Motor neuron (in vitro differentiated cells): ENCODE measurements at regions of chr12 and their contacts with region 1.

Region 1: DNA sequence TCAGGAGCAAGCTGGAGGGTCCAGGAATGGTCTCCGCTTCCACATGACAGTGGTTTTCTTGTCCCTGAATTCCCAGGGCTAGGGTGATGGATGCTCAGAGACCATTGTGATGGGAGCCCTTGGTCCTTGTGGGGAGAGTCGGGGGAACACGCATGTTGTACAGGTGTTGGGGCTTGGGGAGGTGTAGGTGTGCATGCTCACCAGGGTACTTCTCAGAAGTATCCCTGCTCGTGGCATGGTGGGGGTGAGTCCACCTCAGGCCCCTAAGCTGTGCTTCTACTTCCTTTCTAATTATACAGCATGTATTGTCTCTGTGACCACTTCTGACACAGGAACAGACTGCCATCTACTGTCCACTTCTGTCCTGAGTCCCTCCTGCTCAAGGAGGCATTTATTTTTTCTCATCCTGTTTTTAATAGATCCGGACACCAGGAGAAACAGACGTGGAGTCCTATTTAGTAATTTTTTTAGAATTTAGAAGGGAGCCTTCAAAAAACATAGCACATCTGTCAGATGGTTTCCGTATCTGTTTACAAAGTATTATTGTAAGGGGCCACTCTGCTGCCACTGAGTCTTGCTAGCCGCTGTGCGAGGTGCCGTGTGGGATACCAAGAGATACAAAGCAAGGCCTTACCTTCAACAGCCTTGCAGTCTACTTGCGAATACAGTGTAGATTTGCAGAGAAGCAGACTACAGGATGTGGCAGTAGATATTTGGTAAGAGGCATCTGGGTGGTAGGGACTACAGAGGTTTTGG is 10.5 kb downstream of the NTF3 start:
- ATAC-seq: peak; percentile 67 to 97 (median 86)
- H3K4me3 ChIP-seq: no peak overlapping the region
- H3K27ac ChIP-seq: no peak overlapping the region
- H3K4me1 ChIP-seq: no peaks in the 10 kb centered on the region

Region 2: DNA sequence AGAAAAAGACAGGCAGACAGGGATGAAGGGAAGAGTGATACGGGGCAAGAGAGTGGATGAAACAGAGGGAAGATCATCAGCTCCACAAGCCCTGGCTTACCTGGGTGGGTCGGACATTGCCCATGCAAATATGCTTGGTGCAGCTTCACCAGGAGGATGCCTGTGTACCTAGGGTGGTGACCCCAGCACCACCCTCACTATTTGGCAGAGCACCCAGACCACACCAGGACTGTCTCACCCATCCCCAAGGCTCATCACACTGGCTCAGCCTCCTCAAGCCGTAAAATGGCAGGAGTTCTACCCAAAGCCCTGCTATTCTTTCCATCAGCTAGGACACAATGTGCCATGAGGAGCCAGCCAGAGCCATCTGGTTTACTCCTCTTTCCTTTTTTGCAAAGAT is 719.2 kb before region 1 on chr12:
- in situ Hi-C with region 1: no loop called
- ATAC-seq: peak in 2 of 8 experiments; percentile 24 to 50
- H3K4me3 ChIP-seq: no peak overlapping the region
- H3K27ac ChIP-seq: no peak overlapping the region
- H3K4me1 ChIP-seq: no peaks in the 10 kb centered on the region

Region 3: GRCh38 chr12:5200278-5201087 is 241.9 kb before region 1 on chr12:
- in situ Hi-C with region 1: loop called in 6 of 9 experiments (anchors 25 kb)
- ATAC-seq: peak; percentile 49 to 86 (median 54)
- H3K4me3 ChIP-seq: no peak overlapping the region
- H3K27ac ChIP-seq: peak overlapping the region; percentile 84 to 89
- H3K4me1 ChIP-seq: peaks cover 39 to 42% of the 10 kb centered on the region in 2 donors

Region 4: DNA sequence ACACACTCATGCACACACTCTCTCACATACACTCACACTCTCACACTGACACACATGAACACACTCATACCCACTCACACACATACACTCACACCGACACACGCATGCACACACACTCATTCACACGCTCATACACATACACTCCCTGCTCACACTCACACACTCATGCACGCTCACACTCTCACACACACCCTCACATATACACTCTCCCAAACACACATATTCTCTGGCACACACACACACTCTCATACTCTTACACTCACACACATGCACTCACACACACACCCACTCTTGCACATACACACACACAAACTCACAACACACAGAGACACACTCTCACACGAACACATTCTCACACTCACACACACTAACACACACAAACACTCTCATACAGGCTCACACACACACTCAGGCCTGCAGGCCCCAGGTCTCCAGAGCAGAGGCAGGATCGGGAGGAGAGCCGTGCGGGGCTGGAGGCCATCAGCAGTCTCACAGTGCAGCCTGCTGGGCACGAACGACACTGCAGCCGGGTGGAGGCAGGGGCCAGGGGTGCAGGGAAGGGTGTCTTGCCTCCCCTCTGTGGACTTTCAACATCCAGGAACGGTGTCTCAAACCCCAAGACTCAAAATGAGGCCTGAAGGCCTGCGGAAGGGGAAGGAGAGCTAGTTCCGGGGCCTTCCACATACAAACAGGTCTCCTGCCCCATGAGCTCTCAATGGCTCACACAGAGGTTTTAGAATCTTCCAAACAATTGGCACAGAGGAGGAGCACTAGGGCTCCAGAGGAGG is 353.9 kb after region 1 on chr12:
- in situ Hi-C with region 1: loop called in 1 of 9 experiments (anchors 25 kb)
- ATAC-seq: peak; percentile 56 to 99 (median 87)
- H3K4me3 ChIP-seq: no peak overlapping the region
- H3K27ac ChIP-seq: no peak overlapping the region
- H3K4me1 ChIP-seq: no peaks in the 10 kb centered on the region